Heart left ventricle (tissue), 16 donors: ENCODE measurements at regions of chr12 and their contacts with region 1.

Region 1: DNA sequence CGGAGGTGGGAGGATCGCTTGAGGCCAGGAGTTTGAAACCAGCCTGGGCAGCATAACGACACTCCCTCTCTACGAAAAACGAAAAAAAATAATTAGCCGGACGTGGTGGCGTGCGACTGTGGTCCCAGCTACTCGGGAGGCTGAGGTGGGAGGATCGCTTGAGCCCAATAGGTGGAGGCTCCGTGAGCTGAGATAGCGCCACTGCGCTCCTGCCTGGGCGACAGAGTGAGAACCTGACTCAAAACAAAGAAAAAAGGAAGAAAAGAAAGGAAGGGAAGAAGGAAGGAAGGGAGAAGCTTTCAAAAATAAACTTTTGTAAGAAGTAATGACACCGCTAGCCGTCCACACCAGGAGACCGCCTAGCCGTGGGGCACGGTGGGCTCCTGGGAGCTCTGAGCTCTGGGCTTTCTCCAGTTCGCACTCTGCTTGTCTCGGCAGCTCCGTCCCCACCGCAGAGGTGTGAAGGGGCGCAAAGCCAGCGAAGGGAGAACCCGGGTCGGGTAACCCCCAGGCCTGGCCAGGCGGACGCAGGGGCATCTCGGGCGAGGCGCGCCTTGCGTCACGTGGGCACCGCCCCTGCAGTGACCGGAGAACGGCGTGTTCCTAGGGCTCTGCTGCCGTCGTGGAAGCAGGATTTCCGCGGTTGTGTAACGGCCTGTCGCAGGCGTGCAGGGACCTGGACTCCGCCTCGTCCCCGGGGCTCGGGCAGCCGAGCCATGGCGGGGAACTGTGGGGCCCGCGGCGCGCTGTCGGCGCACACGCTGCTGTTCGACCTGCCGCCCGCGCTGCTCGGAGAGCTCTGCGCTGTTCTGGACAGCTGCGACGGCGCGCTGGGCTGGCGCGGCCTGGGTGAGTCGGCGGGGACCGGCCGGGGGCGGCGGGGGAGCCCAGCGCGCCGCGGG is at the start of gene IRAK3:
- DNase-seq: peak; percentile 84 to 93 (median 90)
- ATAC-seq: peak; percentile 94 to 98 (median 98)
- H3K4me3 ChIP-seq: peak within 1 kb of the TSS; percentile 40 to 75 (median 65)
- H3K27ac ChIP-seq: peak within 1 kb of the TSS; percentile 82 to 96 (median 91)
- H3K4me1 ChIP-seq: peaks cover 0 to 52% (median 7%) of the 10 kb centered on the region in 12 donors
- H3K27me3 ChIP-seq: peaks cover 0 to 11% (median 0%) of the 10 kb centered on the region in 9 donors
- CTCF ChIP-seq: no peak
- POLR2A ChIP-seq: peak; percentile 27 to 87
- total RNA-seq, gene IRAK3: 3.0 to 11.4 (median 5.7) TPM

Region 2: DNA sequence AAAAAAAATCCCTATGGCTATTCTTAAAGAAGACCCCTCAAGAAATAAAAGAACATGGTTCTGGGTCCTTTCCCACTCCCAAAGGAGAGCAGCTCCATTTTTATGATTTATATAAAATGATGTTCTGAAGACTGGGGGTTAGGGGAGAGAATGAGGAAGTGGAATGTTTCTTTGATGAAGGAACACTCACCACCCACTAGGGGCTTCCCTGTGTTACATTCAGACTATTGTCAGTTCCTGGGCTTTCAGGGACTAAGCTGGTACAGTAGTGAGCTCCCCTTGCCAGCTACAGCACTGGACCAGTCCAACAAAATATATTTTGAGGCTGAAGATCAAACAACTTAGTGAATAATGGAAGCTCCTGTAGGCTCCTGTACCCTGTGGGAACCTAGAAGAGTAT is 265.6 kb before region 1 on chr12:
- intact Hi-C with region 1: no loop called
- DNase-seq: no peak
- ATAC-seq: no peak
- H3K4me3 ChIP-seq: no peak overlapping the region
- H3K27ac ChIP-seq: no peak overlapping the region
- H3K4me1 ChIP-seq: peaks cover 0 to 23% (median 0%) of the 10 kb centered on the region in 12 donors
- H3K27me3 ChIP-seq: no peaks in the 10 kb centered on the region
- CTCF ChIP-seq: no peak
- POLR2A ChIP-seq: no peak

Region 3: DNA sequence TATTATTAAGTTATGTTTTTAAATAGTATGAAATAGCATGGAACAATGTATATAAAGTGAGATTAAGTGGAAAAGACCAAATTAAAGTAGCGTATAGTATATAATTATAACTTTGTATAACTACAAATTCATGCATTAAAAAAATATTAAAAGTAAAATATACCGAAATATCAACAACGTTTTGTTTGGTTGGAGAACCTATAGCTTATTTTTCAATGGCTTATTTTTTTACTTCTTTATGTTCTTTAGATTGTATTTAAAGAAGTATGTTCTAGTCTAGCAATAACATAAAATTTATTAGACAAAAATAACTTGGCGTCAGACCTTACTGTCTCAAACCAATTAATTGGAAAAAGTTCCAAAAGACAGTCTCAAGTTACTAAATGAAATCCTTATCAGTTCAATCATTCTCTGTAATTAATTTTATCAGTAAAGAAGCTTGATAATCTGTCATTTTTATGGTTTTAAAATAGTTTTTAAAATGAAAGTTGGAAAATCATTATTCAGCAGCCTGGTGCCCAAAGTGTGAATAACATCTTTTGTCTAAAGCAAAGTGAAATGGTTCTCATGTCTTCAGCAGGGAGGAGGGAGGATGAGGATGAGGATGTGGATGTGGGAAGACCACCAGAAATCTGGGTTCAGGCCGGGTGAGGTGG is 46.9 kb after region 1 on chr12:
- intact Hi-C with region 1: loop called in 1 of 10 experiments (anchors 5 kb)
- DNase-seq: no peak
- ATAC-seq: no peak
- H3K4me3 ChIP-seq: peak overlapping the region; percentile 16 to 76 (median 58)
- H3K27ac ChIP-seq: peak overlapping the region in 6 of 12 donors; percentile 34 to 80 (median 48)
- H3K4me1 ChIP-seq: peaks cover 0 to 66% (median 5%) of the 10 kb centered on the region in 12 donors
- H3K27me3 ChIP-seq: no peaks in the 10 kb centered on the region
- CTCF ChIP-seq: peak in 1 of 12 donors; percentile 8
- POLR2A ChIP-seq: no peak

Region 4: GRCh38 chr12:67042697-67043131 is 853.9 kb after region 1 on chr12:
- intact Hi-C with region 1: no loop called
- DNase-seq: no peak
- ATAC-seq: peak in 2 of 4 donors; percentile 55 to 72
- H3K4me3 ChIP-seq: no peak overlapping the region
- H3K27ac ChIP-seq: no peak overlapping the region
- H3K4me1 ChIP-seq: no peaks in the 10 kb centered on the region
- H3K27me3 ChIP-seq: peaks cover 0 to 4% (median 0%) of the 10 kb centered on the region in 9 donors
- CTCF ChIP-seq: no peak
- POLR2A ChIP-seq: no peak